ENCODE measurements at regions of chr16 and their contacts with region 1.

Region 1: DNA sequence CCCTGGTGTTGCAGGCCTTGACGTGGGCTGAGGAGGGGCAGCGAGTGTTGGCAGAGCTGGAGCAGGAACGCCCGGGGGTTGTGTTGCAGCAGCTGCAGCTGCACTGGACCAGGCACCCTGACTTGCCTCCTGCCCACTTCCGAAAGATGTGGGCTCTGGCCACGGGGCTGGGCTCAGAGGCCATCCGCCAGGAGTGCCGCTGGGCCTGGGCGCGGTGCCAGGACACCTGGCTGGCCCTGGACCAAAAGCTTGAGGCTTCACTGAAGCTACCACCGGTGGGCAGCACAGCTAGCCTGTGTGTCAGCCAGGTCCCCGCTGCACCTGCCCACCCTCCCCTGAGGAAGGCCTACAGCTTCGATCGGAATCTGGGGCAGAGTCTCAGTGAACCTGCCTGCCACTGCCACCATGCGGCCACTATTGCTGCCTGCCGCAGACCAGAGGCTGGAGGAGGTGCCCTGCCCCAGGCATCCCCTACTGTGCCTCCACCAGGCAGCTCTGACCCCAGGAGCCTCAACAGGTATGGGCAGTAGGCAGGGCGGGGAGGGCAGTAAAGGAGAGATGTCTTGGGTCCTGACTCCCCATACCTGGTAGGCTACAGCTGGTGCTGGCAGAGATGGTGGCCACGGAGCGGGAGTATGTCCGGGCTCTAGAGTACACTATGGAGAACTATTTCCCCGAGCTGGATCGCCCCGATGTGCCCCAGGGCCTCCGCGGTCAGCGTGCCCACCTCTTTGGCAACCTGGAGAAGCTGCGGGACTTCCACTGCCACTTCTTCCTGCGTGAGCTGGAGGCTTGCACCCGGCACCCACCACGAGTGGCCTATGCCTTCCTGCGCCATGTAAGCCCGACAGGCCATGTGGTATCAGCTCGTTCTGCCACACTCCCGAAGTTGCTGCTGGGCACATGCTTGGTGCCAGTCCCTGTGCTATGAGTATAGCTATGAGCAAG is 5.6 kb downstream of the PLEKHG4 start:
- DNase-seq: peak; percentile 62 to 82
- H3K4me3 ChIP-seq: no peak overlapping the region
- H3K27ac ChIP-seq: no peak overlapping the region
- H3K4me1 ChIP-seq: peaks cover 0 to 2% (median 0%) of the 10 kb centered on the region in 4 experiments; a peak in 1 of 7 replicates
- H3K27me3 ChIP-seq: peaks cover 0 to 5% (median 4%) of the 10 kb centered on the region in 4 experiments; a peak in 3 of 7 replicates
- CTCF ChIP-seq: peak; percentile 89 to 92 (median 92)
- EP300 ChIP-seq: no peak
- POLR2A ChIP-seq: no peak
- RAD21 ChIP-seq: peak; percentile 62 to 78

Region 2: DNA sequence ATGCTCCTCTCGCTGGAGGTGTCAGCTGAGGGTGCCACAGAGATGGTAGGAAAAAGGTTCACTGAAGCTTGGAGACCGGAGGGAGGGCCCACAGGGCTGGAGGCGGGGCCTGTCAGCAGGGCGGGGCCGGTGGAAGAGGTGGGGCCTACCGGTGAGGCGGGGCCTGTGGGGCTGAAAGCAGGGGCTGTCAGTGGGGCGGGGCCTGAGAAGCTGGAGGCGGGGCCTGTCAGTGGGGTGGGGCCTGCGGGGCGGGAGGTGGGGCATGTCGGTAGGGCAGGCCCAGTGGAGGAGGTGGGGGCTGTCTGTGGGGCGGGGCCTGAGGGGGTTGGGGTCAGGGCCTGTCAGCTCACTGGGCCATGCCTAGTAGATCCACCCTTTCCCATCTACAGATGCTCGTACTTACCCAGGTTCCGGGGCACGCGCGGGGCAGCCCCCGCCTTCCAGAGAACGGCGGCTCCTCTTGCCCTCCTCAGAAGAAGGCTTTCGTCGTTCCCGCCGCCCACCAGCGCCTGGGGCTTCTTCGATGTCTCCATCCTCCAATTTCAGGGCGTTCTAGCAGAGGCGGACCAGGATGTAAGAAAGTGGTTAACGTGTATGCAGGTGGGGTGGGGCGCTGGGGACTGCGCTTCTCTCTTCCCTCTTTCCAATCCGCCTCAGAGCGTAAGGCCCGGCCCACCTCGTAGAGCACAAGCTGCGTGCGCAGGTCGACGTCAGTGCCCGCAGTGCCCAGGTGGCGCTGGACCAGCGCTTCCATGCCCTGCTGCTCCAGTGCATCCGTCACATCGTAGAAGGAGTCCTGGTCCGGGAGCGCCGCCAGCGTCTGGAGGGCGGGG is 48.2 kb before region 1 on chr16:
- CTCF ChIA-PET with region 1: interaction called, 23 read pairs
- POLR2A ChIA-PET with region 1: no interaction called
- DNase-seq: peak; percentile 77 to 98
- H3K4me3 ChIP-seq: no peak overlapping the region
- H3K27ac ChIP-seq: no peak overlapping the region
- H3K4me1 ChIP-seq: peaks cover 3 to 8% (median 7%) of the 10 kb centered on the region in 4 experiments; a peak in 6 of 7 replicates
- H3K27me3 ChIP-seq: no peaks in the 10 kb centered on the region
- CTCF ChIP-seq: no peak
- EP300 ChIP-seq: no peak
- POLR2A ChIP-seq: no peak
- RAD21 ChIP-seq: no peak

Region 3: DNA sequence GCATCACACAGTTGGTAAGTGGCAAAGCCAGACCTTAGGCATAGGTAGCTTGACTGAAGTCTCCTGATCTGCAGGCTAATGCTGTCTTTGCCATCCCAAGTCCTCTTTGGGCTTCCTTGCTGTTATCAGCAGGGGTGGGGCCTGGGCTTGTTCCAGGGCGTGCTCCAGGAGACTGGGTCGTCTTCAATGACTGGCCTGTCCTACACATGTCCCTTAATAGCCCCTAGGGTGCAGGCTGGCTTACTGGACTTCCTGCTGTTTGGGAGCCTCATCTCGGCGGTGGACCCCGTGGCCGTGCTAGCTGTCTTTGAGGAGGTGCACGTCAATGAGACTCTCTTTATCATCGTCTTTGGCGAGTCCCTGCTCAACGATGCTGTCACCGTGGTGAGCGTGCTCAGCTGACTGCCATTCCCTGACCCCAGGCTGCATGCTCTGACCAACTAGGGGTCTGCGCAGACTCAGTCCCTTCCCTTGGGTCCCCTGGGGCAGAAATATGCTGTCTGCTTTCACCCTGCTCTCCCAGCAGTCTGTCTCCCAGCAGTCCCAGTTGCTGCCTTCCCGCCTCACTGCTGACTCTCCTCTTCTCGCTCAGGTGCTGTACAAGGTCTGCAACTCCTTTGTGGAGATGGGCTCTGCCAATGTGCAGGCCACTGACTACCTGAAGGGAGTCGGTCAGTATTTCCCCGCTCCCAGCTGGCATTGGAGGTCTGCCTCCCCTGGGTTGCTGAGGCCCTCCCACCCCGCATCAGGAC is 30.0 kb before region 1 on chr16:
- CTCF ChIA-PET with region 1: interaction called, 217 read pairs
- POLR2A ChIA-PET with region 1: interaction called, 12 read pairs
- DNase-seq: no peak
- H3K4me3 ChIP-seq: no peak overlapping the region
- H3K27ac ChIP-seq: no peak overlapping the region
- H3K4me1 ChIP-seq: no peaks in the 10 kb centered on the region; a peak in 1 of 7 replicates
- H3K27me3 ChIP-seq: peaks cover 0 to 6% (median 1%) of the 10 kb centered on the region in 4 experiments; a peak in 4 of 7 replicates
- CTCF ChIP-seq: no peak
- EP300 ChIP-seq: no peak
- POLR2A ChIP-seq: no peak
- RAD21 ChIP-seq: no peak

Region 4: GRCh38 chr16:67311607-67312488 is 26.9 kb after region 1 on chr16:
- CTCF ChIA-PET with region 1: interaction called, 26 read pairs
- POLR2A ChIA-PET with region 1: no interaction called
- DNase-seq: no peak
- H3K4me3 ChIP-seq: no peak overlapping the region
- H3K27ac ChIP-seq: no peak overlapping the region
- H3K4me1 ChIP-seq: no peaks in the 10 kb centered on the region
- H3K27me3 ChIP-seq: no peaks in the 10 kb centered on the region
- CTCF ChIP-seq: no peak
- EP300 ChIP-seq: no peak
- POLR2A ChIP-seq: no peak
- RAD21 ChIP-seq: no peak

Region 5: GRCh38 chr16:67393035-67393787 is 108.2 kb after region 1 on chr16 and contains the start of gene TPPP3:
- CTCF ChIA-PET with region 1: interaction called, 55 read pairs
- POLR2A ChIA-PET with region 1: interaction called, 3 read pairs
- DNase-seq: peak in 1 of 2 experiments; percentile 87
- H3K4me3 ChIP-seq: peak within 1 kb of the TSS; percentile 21 to 58 (median 39); a peak in 7 of 8 replicates
- H3K27ac ChIP-seq: no peak within 1 kb of the TSS
- H3K4me1 ChIP-seq: peaks cover 0 to 35% (median 23%) of the 10 kb centered on the region in 4 experiments; a peak in 6 of 7 replicates
- H3K27me3 ChIP-seq: peaks cover 24 to 48% (median 41%) of the 10 kb centered on the region in 4 experiments
- CTCF ChIP-seq: peak in 2 of 3 experiments; percentile 66 to 69; a peak in 3 of 4 replicates
- EP300 ChIP-seq: peak in 1 of 2 experiments; percentile 62; a peak in 1 of 3 replicates
- POLR2A ChIP-seq: no peak
- RAD21 ChIP-seq: peak; percentile 39 to 53; a peak in 2 of 4 replicates
- total RNA-seq, gene TPPP3: 0.61 and 1.0 TPM in 2 replicates

Measured in H1 (cell line).